PC-9 (cell line): ENCODE measurements at regions of chr11 and their contacts with region 1.

Region 1: DNA sequence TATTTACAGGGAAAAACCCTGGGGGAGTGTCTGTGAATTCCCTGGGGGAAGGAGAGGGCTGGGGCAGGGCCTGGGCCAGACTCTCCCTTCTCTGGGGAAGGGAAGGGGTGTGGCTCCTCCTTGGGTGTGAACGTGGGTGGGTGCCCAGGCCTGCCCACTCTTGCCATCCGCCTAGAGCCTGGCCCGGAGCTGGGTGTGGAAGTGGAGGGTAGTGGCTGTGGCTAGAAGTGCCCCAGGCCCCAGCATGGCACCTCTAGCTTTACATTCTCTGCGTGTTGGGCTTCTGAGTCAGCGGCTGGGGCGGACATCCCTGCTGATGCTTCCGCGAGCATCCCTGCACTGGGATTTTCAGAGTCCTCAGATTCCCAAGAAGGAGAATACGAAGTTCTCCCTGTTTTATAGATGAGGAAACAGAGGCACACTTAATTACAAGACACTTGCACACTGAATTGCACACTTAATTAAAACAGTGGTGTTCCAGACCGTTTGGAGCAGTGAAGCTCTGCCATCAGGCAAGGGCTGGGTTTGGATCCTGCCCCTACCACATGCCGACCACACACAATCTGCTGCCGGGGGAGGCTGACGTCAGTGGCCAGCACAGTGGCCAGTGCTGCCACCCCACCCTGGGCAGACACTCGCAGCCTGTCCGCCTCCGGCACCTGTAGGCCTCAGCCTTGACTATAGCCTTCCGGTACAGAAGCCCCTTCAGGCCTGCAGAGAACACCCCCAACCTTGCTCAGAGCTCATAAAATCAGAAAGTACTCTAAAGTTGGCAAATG is 7.6 kb downstream of the BAD start:
- DNase-seq: peak; percentile 85 to 97
- H3K4me3 ChIP-seq: no peak overlapping the region
- H3K27ac ChIP-seq: peak overlapping the region; percentile 41
- H3K4me1 ChIP-seq: peaks cover 28% of the 10 kb centered on the region
- H3K27me3 ChIP-seq: no peaks in the 10 kb centered on the region
- CTCF ChIP-seq: no peak

Region 2: GRCh38 chr11:63614136-63614664 is 662.6 kb before region 1 on chr11 and contains the start of gene PLAAT3:
- CTCF ChIA-PET with region 1: no interaction called
- POLR2A ChIA-PET with region 1: interaction called, 18 read pairs
- intact Hi-C with region 1: no loop called
- DNase-seq: peak; percentile 77 to 92
- H3K4me3 ChIP-seq: peak within 1 kb of the TSS; percentile 74
- H3K27ac ChIP-seq: peak within 1 kb of the TSS; percentile 41
- H3K4me1 ChIP-seq: peaks cover 38% of the 10 kb centered on the region
- H3K27me3 ChIP-seq: no peaks in the 10 kb centered on the region
- CTCF ChIP-seq: no peak
- total RNA-seq, gene PLAAT3: 240 and 266 TPM in 2 replicates

Region 3: DNA sequence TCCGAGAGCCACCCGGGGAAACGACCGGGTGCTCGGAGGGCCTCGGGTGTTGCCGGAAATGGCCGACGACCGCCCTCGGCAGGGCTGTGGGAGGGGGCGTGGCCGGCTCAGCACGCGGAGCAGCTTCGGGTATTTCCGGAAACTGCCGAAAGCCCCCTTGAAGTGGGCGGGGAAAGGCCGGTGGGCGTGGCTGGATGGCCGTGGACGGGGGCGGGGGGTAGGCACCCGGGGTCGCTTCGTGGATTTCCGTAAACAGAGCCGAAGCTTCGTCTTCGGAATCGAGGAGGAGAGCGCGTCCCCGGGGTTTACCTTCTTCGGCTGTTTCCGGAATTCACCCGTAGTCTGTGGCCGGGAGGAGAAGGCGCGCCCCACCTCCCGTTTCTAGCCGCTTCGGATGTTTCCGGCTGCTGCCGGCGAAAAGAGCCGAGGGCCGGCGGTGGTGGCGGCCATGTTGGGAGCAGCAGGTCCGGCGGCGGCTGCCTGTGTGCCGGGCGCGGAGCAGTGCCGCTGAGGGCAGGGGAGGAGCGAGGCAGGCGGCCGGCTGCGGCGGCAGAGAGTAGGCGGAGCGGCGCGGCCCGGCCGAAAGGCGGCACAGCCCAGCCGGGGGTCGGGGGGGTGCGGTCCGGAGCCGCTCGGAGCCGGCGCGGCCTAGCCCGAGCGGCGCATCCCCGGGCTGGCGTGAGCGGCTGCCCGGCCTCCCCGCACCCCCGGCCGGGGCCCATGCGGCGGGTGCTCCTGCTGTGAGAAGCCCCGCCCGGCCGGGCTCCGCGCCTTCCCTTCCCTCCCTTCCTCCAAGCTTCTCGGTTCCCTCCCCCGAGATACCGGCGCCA is 437.9 kb before region 1 on chr11 and contains the start of gene MARK2:
- CTCF ChIA-PET with region 1: no interaction called
- POLR2A ChIA-PET with region 1: no interaction called
- intact Hi-C with region 1: no loop called
- DNase-seq: peak; percentile 96 to 99
- H3K4me3 ChIP-seq: peak within 1 kb of the TSS; percentile 90
- H3K27ac ChIP-seq: peak within 1 kb of the TSS; percentile 39
- H3K4me1 ChIP-seq: peaks cover 53% of the 10 kb centered on the region
- H3K27me3 ChIP-seq: no peaks in the 10 kb centered on the region
- CTCF ChIP-seq: no peak
- total RNA-seq, gene MARK2: 53.8 and 65.0 TPM in 2 replicates

Region 4: GRCh38 chr11:64230171-64230984 is 46.5 kb before region 1 on chr11 and contains the start of gene DNAJC4:
- CTCF ChIA-PET with region 1: no interaction called
- POLR2A ChIA-PET with region 1: no interaction called
- intact Hi-C with region 1: loop called (anchors 2 kb)
- DNase-seq: peak; percentile 89 to 96
- H3K4me3 ChIP-seq: peak within 1 kb of the TSS; percentile 81
- H3K27ac ChIP-seq: no peak within 1 kb of the TSS
- H3K4me1 ChIP-seq: peaks cover 31% of the 10 kb centered on the region
- H3K27me3 ChIP-seq: no peaks in the 10 kb centered on the region
- CTCF ChIP-seq: no peak
- total RNA-seq, gene DNAJC4: 55.0 and 57.1 TPM in 2 replicates

Region 5: GRCh38 chr11:64331557-64332371 is 54.9 kb after region 1 on chr11:
- CTCF ChIA-PET with region 1: interaction called, 9 read pairs
- POLR2A ChIA-PET with region 1: no interaction called
- intact Hi-C with region 1: loop called (anchors 2 kb)
- DNase-seq: peak; percentile 97 to 99
- H3K4me3 ChIP-seq: no peak overlapping the region; the same call in 1 of the 2 replicates
- H3K27ac ChIP-seq: peak overlapping the region; percentile 83
- H3K4me1 ChIP-seq: peaks cover 51% of the 10 kb centered on the region
- H3K27me3 ChIP-seq: no peaks in the 10 kb centered on the region
- CTCF ChIP-seq: peak; percentile 88

Region 6: GRCh38 chr11:64516226-64516625 is 239.4 kb after region 1 on chr11:
- CTCF ChIA-PET with region 1: no interaction called
- POLR2A ChIA-PET with region 1: no interaction called
- intact Hi-C with region 1: no loop called
- DNase-seq: no peak
- H3K4me3 ChIP-seq: no peak overlapping the region
- H3K27ac ChIP-seq: no peak overlapping the region
- H3K4me1 ChIP-seq: no peaks in the 10 kb centered on the region
- H3K27me3 ChIP-seq: peaks cover 98% of the 10 kb centered on the region
- CTCF ChIP-seq: no peak; the same call in 1 of the 2 replicates